ENCODE measurements at regions of chr1 and their contacts with region 1.

Region 1: DNA sequence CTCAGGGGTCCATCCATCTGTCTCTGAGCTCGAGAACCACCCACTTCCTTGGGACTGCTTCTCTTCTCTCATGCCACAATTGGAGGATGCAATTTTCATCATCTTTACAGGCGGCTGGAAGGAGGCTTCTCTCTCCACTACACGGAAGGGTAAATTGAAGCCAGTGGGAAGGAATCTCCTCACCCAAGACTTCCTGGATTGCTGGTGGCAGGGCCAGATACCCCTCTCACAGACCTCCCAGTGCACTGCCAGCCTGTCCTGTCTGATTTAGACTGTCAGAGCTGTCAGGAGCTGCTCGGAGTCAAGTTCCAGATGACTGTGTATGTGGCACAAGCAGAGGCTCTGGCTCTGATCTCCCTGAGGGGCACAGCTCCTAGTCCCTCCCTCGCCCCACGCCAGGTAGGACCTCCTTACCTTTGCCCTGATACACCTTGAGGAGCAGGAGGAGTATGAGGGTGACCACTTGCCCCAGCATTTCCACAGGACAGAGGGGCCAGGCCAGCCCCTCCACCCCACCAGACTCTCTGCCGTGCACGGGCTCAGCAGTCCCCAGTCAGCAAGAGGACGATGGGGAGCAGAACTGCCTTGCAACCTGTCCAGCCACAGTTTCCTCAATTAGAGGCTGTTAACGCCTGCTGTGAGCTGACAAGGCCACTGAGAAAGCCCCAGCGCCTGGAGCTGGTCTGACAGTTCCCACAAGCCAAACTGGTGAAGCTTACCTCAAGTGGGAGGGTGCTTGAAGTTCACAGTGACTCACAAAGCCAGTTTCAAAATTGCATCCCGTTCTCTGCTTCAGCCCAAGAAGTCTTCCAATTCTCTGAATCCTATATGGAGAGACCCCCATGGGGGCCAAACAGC is at the start of gene CD244:
- DNase-seq: peak; percentile 41
- H3K4me3 Mint-ChIP-seq: no peak within 1 kb of the TSS
- H3K27ac Mint-ChIP-seq: peak within 1 kb of the TSS; percentile 26
- H3K4me1 Mint-ChIP-seq: peaks cover 26% of the 10 kb centered on the region
- H3K27me3 Mint-ChIP-seq: no peaks in the 10 kb centered on the region
- total RNA-seq, gene CD244: 1.8 to 2.1 TPM

Region 2: DNA sequence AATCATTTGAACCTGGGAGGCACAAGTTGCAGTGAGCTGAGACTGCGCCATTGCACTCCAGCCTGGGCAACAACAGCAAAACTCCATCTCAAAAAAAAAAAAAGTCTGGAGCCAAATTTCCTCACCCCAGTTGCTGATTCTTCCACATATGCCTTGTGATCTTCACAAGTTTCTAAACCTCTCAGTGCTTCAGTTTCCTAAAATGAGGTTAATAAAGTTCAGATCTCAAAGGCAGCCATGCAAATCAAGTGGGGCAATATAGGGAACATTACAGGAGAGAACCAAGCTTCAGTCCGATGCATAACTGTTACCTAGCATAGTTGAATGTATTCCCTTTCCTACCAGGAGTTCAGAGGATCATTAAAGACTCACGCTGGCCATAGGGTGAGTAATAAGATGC is 17.8 kb after region 1 on chr1:
- CTCF ChIA-PET with region 1: interaction called, 10 read pairs
- POLR2A ChIA-PET with region 1: interaction called, 5 read pairs
- DNase-seq: no peak
- H3K4me3 Mint-ChIP-seq: no peak overlapping the region
- H3K27ac Mint-ChIP-seq: no peak overlapping the region
- H3K4me1 Mint-ChIP-seq: peaks cover 23% of the 10 kb centered on the region
- H3K27me3 Mint-ChIP-seq: no peaks in the 10 kb centered on the region

Region 3: GRCh38 chr1:160935527-160936258 is 73.3 kb after region 1 on chr1:
- CTCF ChIA-PET with region 1: no interaction called
- POLR2A ChIA-PET with region 1: no interaction called
- DNase-seq: no peak
- H3K4me3 Mint-ChIP-seq: no peak overlapping the region
- H3K27ac Mint-ChIP-seq: no peak overlapping the region
- H3K4me1 Mint-ChIP-seq: no peaks in the 10 kb centered on the region
- H3K27me3 Mint-ChIP-seq: peaks cover 30% of the 10 kb centered on the region

Measured in activated CD4-positive, alpha-beta T cell treated with anti-CD3 and anti-CD28 coated beads, Interleukin-2, amount 10 ng/mL, durations not matched to agents 7 days and 5 days (primary cell).